Upper lobe of right lung (tissue), 1 donor: ENCODE measurements at regions of chr5 and their contacts with region 1.

Region 1: GRCh38 chr5:143400541-143401226 is 2.8 kb downstream of the NR3C1 start:
- DNase-seq: no peak
- ATAC-seq: no peak
- H3K4me3 ChIP-seq: peak overlapping the region; percentile 91
- H3K27ac ChIP-seq: peak overlapping the region; percentile 37
- H3K4me1 ChIP-seq: peaks cover 43% of the 10 kb centered on the region
- H3K27me3 ChIP-seq: no peaks in the 10 kb centered on the region
- CTCF ChIP-seq: no peak

Region 2: GRCh38 chr5:143008809-143009521 is 391.7 kb before region 1 on chr5:
- intact Hi-C with region 1: loop called (anchors 2 kb)
- DNase-seq: no peak
- ATAC-seq: peak; percentile 78
- H3K4me3 ChIP-seq: no peak overlapping the region
- H3K27ac ChIP-seq: peak overlapping the region; percentile 24
- H3K4me1 ChIP-seq: peaks cover 57% of the 10 kb centered on the region
- H3K27me3 ChIP-seq: no peaks in the 10 kb centered on the region
- CTCF ChIP-seq: no peak